ENCODE measurements at regions of chr5 and their contacts with region 1.

Region 1: GRCh38 chr5:126776497-126777256 is at the start of gene LMNB1:
- DNase-seq: peak; percentile 86

Region 2: GRCh38 chr5:126503602-126504104 is 273.0 kb before region 1 on chr5:
- CTCF ChIA-PET with region 1: no interaction called
- POLR2A ChIA-PET with region 1: no interaction called
- DNase-seq: no peak

Region 3: DNA sequence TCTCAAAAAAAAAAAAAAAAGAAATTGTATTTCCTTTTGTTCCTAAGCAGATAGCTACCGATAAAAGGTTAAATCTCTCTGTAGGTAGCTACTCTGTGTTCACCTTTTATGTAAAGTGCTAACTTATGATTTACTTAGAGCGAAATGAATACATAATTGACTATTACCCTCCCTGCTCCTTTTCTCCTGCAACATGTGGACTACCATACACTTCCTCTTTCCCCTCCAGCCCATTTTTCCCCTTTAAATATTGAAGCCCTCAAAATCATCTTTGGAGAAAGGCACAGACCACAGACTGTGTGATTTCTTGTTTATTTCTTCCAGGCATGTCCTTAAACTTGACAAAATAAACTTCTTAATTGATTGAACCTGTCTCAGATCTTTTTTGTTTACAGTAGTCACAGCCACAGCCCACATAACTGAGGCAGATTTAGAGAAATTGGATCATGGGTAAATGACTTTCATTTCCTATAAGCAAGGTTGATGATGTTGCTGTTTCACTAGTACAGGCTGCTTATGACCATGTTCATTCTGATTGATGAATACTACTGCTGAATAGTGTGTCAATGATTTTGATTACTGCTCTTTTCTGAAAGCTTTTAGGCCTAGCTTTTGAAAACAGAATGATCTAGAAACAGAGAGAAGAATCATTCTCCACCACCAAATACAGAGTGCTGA is 116.7 kb before region 1 on chr5:
- CTCF ChIA-PET with region 1: interaction called, 3 read pairs
- POLR2A ChIA-PET with region 1: interaction called, 18 read pairs
- DNase-seq: no peak

Region 4: DNA sequence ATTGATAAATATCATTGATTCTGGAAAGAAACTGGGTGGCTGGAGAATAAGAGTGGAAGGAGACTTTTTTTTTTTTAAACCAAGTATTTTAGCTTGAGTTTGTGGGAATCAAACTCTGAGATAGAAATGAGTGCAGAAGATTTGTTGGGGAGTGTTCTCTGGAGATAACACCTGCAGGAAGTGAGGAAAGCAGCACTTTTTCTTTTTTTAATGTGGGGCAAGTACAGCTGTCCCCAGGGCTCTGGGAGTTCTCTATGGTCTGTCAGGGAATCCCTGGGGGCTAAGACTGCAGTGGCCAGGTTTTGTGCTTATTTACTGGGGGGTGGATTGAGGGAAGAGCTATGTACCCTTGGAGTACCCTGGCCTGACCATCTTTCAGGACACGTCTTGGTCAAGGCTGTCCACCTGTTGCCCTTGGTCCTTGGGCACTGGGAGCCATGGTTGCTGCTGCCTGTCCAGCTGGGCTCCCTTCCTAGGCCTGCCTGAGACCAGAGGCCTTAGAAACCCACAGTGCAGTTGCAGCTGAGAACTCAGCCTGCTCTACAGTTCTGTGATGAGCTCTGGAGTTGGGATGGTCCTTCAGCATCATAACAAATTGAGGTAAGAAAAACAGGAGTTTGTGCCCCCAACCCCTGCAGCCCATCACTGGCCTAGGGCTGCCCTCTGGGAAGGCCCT is 90.1 kb before region 1 on chr5:
- CTCF ChIA-PET with region 1: interaction called, 11 read pairs
- POLR2A ChIA-PET with region 1: interaction called, 78 read pairs
- DNase-seq: no peak

Region 5: DNA sequence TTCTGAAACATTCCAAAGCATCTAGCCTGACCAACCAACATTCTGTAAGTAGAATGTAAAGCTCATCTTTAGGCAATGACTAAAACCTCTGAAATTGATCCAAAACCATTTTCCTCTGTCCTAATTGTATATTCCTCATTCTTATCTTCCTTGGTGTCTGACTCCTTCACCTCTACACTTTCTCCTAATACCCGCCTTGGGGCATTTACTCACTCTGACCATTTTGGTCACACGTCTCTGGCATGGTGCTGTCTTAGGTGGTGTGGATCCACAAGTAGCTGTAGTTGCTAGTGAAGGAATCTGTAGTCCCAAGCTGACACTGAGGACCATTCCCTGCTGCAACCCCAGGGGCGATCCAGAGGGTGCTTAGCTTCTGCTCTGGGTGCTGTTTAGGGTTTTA is 40.5 kb before region 1 on chr5:
- CTCF ChIA-PET with region 1: no interaction called
- POLR2A ChIA-PET with region 1: interaction called, 11 read pairs
- DNase-seq: no peak

Region 6: DNA sequence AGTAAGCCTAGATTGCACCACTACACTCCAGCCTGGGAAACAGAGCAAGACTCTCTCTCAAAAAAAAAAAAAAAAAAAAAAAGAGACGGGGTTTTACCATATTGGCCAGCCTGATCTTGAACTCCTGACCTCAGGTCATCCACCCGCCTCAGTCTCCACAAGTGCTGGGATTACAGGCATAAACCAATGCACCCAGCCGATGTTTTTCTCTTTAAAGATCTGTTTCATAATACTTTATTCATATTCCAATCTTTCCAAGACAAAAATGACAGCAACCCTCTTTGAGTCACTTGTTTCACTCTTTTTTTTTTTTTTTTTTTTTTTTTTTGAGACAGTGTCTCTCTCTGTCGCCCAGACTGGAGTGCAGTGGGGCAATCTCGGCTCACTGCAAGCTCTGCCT is 13.3 kb before region 1 on chr5:
- CTCF ChIA-PET with region 1: no interaction called
- POLR2A ChIA-PET with region 1: interaction called, 24 read pairs
- DNase-seq: no peak

Region 7: DNA sequence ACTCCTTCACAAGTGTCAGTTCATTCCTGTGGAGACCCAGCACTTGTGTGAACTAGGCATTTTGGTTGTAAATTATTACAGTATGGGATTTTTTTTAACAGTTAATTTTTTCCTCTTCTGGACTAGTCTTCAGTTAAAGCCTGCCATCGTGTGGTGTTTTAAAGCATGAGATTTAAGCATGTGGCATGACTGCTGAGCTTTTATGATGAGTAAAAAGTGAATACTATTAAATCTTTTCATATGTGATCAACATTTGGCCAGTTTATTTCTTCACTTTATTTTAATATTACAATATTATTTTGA is 25.3 kb after region 1 on chr5:
- CTCF ChIA-PET with region 1: interaction called, 3 read pairs
- POLR2A ChIA-PET with region 1: interaction called, 15 read pairs
- DNase-seq: peak; percentile 14

Region 8: GRCh38 chr5:126846344-126846743 is 69.7 kb after region 1 on chr5:
- CTCF ChIA-PET with region 1: no interaction called
- POLR2A ChIA-PET with region 1: no interaction called
- DNase-seq: no peak